CD14-positive monocyte (primary cell): ENCODE measurements at regions of chr12 and their contacts with region 1.

Region 1: GRCh38 chr12:116130431-116130830 is 147.1 kb downstream of the MED13L start:
- DNase-seq: no peak
- H3K4me3 ChIP-seq: no peak overlapping the region
- H3K4me3 Mint-ChIP-seq: no peak overlapping the region
- H3K27ac ChIP-seq: peak overlapping the region in 1 of 2 donors; percentile 9
- H3K27ac Mint-ChIP-seq: no peak overlapping the region
- H3K4me1 ChIP-seq: peaks cover 25 to 27% of the 10 kb centered on the region in 2 donors
- H3K4me1 Mint-ChIP-seq: peaks cover 58% of the 10 kb centered on the region
- H3K27me3 ChIP-seq: no peaks in the 10 kb centered on the region
- H3K27me3 Mint-ChIP-seq: no peaks in the 10 kb centered on the region
- CTCF ChIP-seq: no peak

Region 2: DNA sequence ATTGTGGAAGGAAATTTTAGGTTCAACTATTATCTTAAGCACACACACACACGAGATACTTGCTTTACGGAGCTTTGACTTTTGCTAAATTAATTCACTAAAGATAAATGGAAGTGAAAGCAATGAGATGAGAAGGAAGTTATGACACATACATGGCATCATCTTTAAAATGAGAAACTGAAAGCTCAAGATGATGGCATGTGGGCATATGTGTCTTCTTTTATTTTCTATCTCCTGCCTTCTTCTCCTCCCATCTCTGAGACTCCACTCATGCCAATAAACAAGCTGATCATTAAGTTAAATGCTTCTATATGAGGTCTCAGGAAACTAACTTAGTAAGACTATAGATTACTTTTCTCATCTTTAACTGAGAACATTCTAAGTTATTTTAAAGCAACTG is 69.7 kb before region 1 on chr12:
- intact Hi-C with region 1: loop called in 1 of 2 experiments (anchors 5 kb)
- DNase-seq: peak; percentile 48 to 72 (median 70)
- H3K4me3 ChIP-seq: peak overlapping the region; percentile 22 to 85 (median 67)
- H3K4me3 Mint-ChIP-seq: peak overlapping the region; percentile 66 to 80
- H3K27ac ChIP-seq: peak overlapping the region in 1 of 2 donors; percentile 60
- H3K27ac Mint-ChIP-seq: peak overlapping the region; percentile 83 to 92 (median 89)
- H3K4me1 ChIP-seq: peaks cover 9 to 23% of the 10 kb centered on the region in 2 donors
- H3K4me1 Mint-ChIP-seq: peaks cover 25% of the 10 kb centered on the region
- H3K27me3 ChIP-seq: no peaks in the 10 kb centered on the region
- H3K27me3 Mint-ChIP-seq: no peaks in the 10 kb centered on the region
- CTCF ChIP-seq: no peak

Region 3: DNA sequence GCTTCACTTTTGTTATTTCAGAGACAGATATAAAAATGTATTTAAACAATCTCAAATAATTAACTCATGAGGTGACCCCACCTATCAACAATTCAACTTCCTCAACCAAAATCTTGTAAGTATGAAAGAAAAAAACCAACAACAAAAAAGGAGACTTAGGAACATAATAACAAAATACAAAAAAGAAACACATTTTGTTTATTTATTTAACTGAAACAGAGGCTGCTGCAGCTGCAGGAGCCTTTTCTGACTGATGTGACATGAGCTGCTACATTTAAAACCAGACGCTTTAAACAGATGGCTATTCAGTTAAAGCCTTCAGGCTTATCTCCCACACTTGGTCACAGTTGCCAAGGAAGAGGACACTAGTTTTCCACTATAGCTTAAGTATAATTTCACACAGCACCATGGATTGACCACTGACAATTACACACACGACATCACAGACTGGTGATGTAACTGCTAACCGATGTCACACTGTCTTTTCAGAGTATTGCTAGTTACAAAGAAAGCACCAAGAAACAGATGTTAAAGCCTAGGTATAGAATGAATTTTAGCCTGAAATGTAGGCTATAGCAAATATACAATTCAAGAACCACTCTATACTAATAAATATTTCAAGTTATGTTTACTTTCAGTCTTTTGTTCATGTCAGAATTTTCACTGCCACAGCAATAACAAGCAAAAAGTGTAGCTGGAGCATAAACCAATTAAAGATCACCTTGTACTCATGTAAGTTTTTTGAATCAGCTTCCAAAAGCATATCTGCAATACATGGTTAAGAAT is 34.0 kb after region 1 on chr12:
- intact Hi-C with region 1: no loop called
- DNase-seq: peak in 2 of 3 donors; percentile 19 to 25
- H3K4me3 ChIP-seq: no peak overlapping the region
- H3K4me3 Mint-ChIP-seq: no peak overlapping the region
- H3K27ac ChIP-seq: peak overlapping the region in 1 of 2 donors; percentile 66
- H3K27ac Mint-ChIP-seq: peak overlapping the region in 3 of 7 donors; percentile 22 to 56 (median 52)
- H3K4me1 ChIP-seq: peaks cover 0 to 10% of the 10 kb centered on the region in 2 donors
- H3K4me1 Mint-ChIP-seq: peaks cover 30% of the 10 kb centered on the region
- H3K27me3 ChIP-seq: no peaks in the 10 kb centered on the region
- H3K27me3 Mint-ChIP-seq: no peaks in the 10 kb centered on the region
- CTCF ChIP-seq: no peak

Region 4: DNA sequence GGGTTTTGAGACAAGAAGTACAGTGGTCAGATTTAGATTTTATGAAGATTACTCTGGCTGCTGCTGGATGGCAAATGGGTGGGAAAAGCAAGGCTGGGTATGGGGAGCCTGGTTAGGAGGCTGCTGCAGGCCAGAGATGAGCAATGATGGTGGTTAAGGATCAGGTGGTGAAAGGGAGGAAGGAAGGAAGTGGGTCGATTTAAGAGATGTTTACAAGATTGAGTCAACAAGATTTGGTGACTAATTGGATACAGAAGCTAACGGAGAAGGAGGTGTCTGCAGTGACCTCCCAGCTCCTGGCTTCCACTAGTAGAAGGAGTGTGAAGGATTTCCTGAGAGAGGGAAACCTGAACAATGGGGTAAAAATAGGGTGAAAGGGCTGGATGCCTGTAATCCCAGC is 1212.3 kb after region 1 on chr12:
- intact Hi-C with region 1: no loop called
- DNase-seq: no peak
- H3K4me3 ChIP-seq: no peak overlapping the region
- H3K4me3 Mint-ChIP-seq: no peak overlapping the region
- H3K27ac ChIP-seq: no peak overlapping the region
- H3K27ac Mint-ChIP-seq: no peak overlapping the region
- H3K4me1 ChIP-seq: no peaks in the 10 kb centered on the region
- H3K4me1 Mint-ChIP-seq: peaks cover 8% of the 10 kb centered on the region
- H3K27me3 ChIP-seq: peaks cover 0 to 2% of the 10 kb centered on the region in 2 donors
- H3K27me3 Mint-ChIP-seq: peaks cover 3 to 15% (median 9%) of the 10 kb centered on the region in 3 donors
- CTCF ChIP-seq: no peak